ENCODE measurements at regions of chr10 and their contacts with region 1.

Region 1: DNA sequence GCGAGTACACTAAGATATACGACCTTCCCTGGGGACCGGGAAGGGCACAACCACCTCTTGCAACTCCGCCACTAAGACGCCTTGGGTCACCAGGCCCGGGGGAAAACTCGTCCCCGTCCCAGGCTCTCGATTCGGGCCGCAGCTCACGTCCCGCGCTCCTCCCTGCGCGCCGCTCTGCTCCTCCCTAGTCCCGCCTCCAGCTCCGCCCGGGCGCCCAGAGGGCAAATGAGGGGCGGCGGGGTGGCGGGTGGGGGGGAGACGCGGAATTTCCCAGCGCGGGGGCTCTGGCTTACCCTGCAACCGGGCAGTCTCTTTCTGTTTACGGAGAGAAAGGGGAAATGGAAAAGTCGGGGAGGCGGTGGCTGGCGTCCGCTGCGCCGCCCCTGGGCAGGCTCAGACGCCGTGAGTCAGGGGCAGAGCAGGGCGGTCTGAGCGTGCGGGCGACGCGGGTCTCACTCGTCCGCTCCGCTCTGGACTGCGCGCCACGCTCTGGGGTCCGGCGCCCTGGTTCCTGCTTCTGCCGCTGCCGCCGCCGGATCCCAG is at the start of gene MAP3K8:
- DNase-seq: peak; percentile 43 to 95 (median 69)
- ATAC-seq: peak; percentile 71
- H3K4me3 ChIP-seq: peak within 1 kb of the TSS; percentile 93
- H3K4me3 Mint-ChIP-seq: peak within 1 kb of the TSS; percentile 94
- H3K27ac ChIP-seq: peak within 1 kb of the TSS; percentile 74
- H3K27ac Mint-ChIP-seq: peak within 1 kb of the TSS; percentile 69
- H3K4me1 ChIP-seq: peaks cover 45% of the 10 kb centered on the region
- H3K4me1 Mint-ChIP-seq: peaks cover 44% of the 10 kb centered on the region
- H3K27me3 ChIP-seq: no peaks in the 10 kb centered on the region
- H3K27me3 Mint-ChIP-seq: peaks cover 4% of the 10 kb centered on the region
- CTCF ChIP-seq: no peak
- total RNA-seq, gene MAP3K8: 27.3 to 28.9 TPM

Region 2: DNA sequence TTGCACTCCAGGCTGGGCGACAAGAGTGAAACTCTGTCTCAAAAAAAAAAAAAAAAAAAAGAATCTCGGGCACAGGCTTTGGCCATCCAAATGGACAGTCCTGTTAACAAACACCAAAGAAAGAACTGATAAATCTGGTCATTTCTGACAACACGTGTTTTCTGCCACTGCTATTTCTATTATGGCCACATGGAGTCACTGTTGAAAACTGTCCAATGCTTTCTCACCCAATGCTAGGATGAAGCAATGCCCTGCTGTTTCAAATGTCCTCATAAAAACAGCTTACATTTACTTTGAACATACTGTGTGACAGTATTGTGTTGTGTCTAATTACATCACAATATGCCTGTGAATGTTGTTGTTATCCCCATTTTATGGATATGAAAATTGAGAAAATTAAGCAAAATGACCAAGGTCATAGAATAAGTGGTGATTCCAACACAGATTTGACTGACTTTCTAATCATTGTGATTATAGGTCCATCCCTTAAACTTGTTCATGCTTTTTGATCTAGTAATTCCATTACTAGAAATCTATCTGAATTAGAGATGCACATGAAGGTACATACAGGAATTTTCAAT is 19.7 kb before region 1 on chr10:
- CTCF ChIA-PET with region 1: interaction called, 4 read pairs
- POLR2A ChIA-PET with region 1: interaction called, 14 read pairs
- intact Hi-C with region 1: loop called in 1 of 2 experiments (anchors 2 kb)
- DNase-seq: peak in 4 of 14 experiments; percentile 40 to 78 (median 72)
- ATAC-seq: peak; percentile 64
- H3K4me3 ChIP-seq: no peak overlapping the region
- H3K4me3 Mint-ChIP-seq: no peak overlapping the region
- H3K27ac ChIP-seq: no peak overlapping the region
- H3K27ac Mint-ChIP-seq: no peak overlapping the region
- H3K4me1 ChIP-seq: peaks cover 11% of the 10 kb centered on the region
- H3K4me1 Mint-ChIP-seq: peaks cover 13% of the 10 kb centered on the region
- H3K27me3 ChIP-seq: no peaks in the 10 kb centered on the region
- H3K27me3 Mint-ChIP-seq: no peaks in the 10 kb centered on the region
- CTCF ChIP-seq: peak; percentile 81

Region 3: DNA sequence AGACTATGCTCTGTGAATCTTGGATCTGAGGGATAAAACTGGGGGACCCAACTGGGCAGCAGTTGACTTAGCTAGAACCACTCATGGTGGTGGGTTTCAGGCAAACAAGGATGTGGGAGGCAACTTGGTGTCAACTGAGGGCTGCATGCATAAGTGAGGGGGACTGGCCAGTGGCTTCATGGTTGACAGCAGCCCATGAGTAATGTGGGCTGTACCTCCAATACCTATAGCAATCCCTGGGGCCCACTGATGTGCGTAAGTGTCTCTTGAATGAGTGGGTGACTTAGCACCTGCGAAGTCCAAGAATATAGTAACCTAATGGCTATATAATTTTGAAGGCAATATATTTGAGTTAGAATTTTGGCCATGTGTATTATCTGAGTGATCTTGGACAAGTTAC is 13.5 kb before region 1 on chr10:
- CTCF ChIA-PET with region 1: interaction called, 3 read pairs
- POLR2A ChIA-PET with region 1: interaction called, 14 read pairs
- intact Hi-C with region 1: loop called in 1 of 2 experiments (anchors 2 kb)
- DNase-seq: no peak
- ATAC-seq: no peak
- H3K4me3 ChIP-seq: no peak overlapping the region
- H3K4me3 Mint-ChIP-seq: no peak overlapping the region
- H3K27ac ChIP-seq: no peak overlapping the region
- H3K27ac Mint-ChIP-seq: no peak overlapping the region
- H3K4me1 ChIP-seq: peaks cover 11% of the 10 kb centered on the region
- H3K4me1 Mint-ChIP-seq: peaks cover 16% of the 10 kb centered on the region
- H3K27me3 ChIP-seq: no peaks in the 10 kb centered on the region
- H3K27me3 Mint-ChIP-seq: no peaks in the 10 kb centered on the region
- CTCF ChIP-seq: no peak

Region 4: GRCh38 chr10:30456266-30456665 is 22.5 kb after region 1 on chr10:
- CTCF ChIA-PET with region 1: interaction called, 3 read pairs
- POLR2A ChIA-PET with region 1: interaction called, 17 read pairs
- intact Hi-C with region 1: no loop called
- DNase-seq: peak in 8 of 14 experiments; percentile 8 to 63 (median 38)
- ATAC-seq: peak; percentile 66
- H3K4me3 ChIP-seq: peak overlapping the region; percentile 5
- H3K4me3 Mint-ChIP-seq: peak overlapping the region; percentile 54
- H3K27ac ChIP-seq: peak overlapping the region in 1 of 2 donors; percentile 32
- H3K27ac Mint-ChIP-seq: peak overlapping the region; percentile 84
- H3K4me1 ChIP-seq: peaks cover 33% of the 10 kb centered on the region
- H3K4me1 Mint-ChIP-seq: peaks cover 19% of the 10 kb centered on the region
- H3K27me3 ChIP-seq: no peaks in the 10 kb centered on the region
- H3K27me3 Mint-ChIP-seq: no peaks in the 10 kb centered on the region
- CTCF ChIP-seq: no peak

Measured in CD4-positive, alpha-beta T cell (primary cell).